Activated CD4-positive, alpha-beta T cell treated with anti-CD3 and anti-CD28 coated beads for 36 hours (primary cell): ENCODE measurements at regions of chr2 and their contacts with region 1.

Region 1: GRCh38 chr2:64523666-64524603 is at the start of gene AFTPH:
- DNase-seq: peak; percentile 100
- ATAC-seq: peak; percentile 93
- H3K4me3 Mint-ChIP-seq: peak within 1 kb of the TSS; percentile 95
- H3K27ac Mint-ChIP-seq: peak within 1 kb of the TSS; percentile 100
- H3K4me1 Mint-ChIP-seq: peaks cover 30% of the 10 kb centered on the region
- H3K27me3 Mint-ChIP-seq: no peaks in the 10 kb centered on the region
- total RNA-seq, gene AFTPH: 32.3 to 35.2 TPM

Region 2: DNA sequence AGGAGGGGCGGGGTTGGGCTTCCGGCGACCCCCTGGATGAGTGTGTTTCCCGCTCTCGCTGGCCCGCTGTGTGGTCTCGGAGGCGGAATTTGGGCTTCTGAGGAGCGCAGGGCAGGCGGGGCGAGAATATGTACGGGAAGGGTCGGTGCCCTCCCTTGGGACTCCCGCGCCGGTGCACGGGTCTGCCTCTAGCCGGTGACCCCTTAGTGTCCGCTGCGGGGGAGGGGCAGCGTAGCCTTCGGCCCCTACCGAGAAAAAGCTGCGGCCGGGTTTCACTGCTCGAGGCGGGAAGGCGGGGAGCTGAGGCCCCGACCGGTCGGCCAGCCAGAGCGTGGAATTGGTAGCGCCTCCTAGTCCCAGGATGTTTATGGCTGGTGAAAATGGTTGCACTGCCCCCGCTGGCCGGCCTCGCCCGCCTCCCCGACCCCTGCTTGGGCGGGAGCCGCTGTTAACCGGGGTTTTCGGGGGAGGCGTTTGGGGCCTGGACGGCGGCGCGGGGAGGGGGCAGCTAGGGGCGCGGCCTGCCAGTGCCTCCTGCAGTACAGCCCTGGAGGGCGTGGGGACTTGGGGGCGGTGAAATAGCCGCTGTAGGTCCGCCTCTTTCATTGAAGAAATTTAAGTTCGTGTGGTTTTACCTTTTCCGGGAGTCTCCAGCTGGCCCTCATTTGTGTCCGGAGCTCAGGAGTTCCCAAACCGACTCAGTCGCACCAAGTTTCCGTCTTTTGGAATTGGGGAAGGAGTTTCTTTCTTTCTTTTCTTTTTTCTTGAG is 682.5 kb before region 1 on chr2 and contains the start of gene UGP2:
- CTCF ChIA-PET with region 1: no interaction called
- POLR2A ChIA-PET with region 1: no interaction called
- intact Hi-C with region 1: loop called in 1 of 2 experiments (anchors 1 kb)
- DNase-seq: peak; percentile 91
- ATAC-seq: peak; percentile 72
- H3K4me3 Mint-ChIP-seq: peak within 1 kb of the TSS; percentile 92
- H3K27ac Mint-ChIP-seq: peak within 1 kb of the TSS; percentile 98
- H3K4me1 Mint-ChIP-seq: peaks cover 39% of the 10 kb centered on the region
- H3K27me3 Mint-ChIP-seq: no peaks in the 10 kb centered on the region
- total RNA-seq, gene UGP2: 98.4 to 144 TPM

Region 3: DNA sequence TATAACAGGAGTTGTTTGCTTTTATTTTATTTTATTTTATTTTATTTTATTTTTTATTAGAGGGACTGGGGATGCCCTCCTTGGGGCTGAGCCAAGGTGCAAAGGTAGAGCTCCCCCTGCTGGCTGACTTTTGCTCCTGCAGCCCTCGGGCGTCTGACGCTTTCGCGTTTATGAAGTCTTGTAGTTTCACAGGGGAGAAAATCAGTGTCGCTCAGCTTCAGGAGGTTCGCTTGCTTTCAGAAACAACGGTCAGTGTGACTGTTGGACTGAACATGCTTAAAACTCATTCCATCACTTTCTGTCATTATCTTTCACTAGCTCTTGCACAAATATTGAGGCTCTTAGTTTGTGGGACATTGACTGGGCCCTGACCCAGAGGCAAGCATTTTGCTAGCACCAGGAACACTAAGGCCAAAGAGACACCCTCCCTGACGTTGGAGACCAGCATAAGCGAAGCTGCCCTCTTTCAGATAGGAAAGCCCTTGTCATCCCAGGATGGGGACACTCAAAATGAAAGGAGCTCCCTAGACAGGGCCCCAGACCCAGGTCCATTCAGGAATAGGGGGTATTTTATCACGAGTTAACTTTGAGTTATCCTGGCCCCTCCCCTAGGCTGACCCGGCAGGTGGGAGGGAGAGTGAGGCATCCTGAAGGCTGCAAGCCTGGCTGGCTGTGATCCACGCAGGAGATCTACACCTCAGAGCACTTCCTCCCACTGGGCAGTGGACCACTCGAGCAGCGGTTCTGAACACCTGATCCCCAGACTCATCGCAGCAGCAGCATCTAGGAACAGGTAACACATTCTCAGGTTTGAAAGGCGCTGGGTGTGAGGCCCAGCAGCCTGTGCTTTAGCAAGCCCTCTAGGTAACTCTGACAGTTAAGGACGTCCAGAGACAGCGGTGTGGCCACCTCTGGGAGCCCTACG is 35.6 kb before region 1 on chr2:
- CTCF ChIA-PET with region 1: interaction called, 15 read pairs
- POLR2A ChIA-PET with region 1: no interaction called
- intact Hi-C with region 1: no loop called
- DNase-seq: peak; percentile 89
- ATAC-seq: peak; percentile 87
- H3K4me3 Mint-ChIP-seq: no peak overlapping the region
- H3K27ac Mint-ChIP-seq: no peak overlapping the region
- H3K4me1 Mint-ChIP-seq: peaks cover 8% of the 10 kb centered on the region
- H3K27me3 Mint-ChIP-seq: no peaks in the 10 kb centered on the region

Region 4: DNA sequence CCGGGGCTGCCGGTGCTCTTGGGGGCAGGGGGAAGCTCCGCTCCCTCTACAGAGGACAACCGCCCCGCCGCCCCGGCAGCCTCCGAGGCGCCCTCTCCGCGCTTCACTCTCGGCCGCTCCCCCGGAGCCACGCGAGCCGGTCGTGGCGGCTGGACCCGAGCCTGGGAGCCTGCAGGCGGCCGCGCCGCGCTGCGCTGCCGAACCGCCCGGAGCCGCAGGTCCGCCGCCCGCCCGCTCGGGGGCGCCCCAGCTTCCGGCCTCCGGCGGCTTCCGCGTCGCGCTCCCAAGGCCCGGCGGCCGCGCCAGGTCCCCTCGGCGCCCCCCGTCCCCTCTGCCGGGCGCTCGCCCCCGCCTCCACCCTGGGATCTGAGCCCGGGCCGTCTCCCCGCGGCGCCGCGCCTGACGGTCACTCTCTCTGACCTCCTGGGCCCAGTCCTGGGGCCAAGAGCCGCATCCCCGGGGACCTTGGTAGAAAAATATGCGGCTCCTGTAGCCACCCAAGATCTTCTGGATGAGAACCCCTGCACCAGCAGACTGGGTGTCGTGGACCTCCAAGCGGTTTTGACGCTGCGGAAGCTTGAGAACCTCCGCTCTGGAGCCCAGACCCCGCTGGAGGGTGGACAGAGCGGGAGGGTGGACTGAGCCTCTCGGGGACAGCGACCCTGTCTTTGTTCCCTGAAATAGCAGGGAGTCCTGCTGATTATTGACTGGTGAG is 85.4 kb after region 1 on chr2:
- CTCF ChIA-PET with region 1: interaction called, 31 read pairs
- POLR2A ChIA-PET with region 1: no interaction called
- intact Hi-C with region 1: loop called (anchors 1 kb)
- DNase-seq: peak; percentile 82
- ATAC-seq: peak; percentile 61
- H3K4me3 Mint-ChIP-seq: peak overlapping the region; percentile 65
- H3K27ac Mint-ChIP-seq: no peak overlapping the region
- H3K4me1 Mint-ChIP-seq: peaks cover 25% of the 10 kb centered on the region
- H3K27me3 Mint-ChIP-seq: no peaks in the 10 kb centered on the region

Region 5: DNA sequence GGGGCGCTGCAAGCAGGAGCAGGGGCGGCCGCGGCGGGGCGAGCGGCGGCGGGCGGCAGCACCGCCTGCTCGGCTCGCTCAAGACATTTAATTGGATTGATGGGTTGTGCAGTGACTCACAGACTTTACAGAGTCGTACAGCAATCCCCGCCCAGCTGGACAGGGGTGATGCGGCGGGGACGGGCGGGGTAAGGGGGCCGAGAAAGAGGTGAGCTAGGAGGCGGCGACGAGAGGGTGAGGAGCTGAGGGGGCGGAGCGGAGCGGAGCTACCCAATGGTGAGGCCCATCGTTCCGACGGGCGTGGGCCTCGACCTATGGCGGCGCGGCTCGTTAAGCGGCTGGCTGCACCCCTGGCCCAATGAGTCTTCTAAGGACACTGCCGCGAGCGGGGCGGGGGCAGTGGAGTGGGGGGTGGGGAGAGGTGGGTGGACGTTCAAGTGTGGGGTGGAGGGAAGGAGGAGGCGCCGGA is 226.9 kb after region 1 on chr2:
- CTCF ChIA-PET with region 1: interaction called, 3 read pairs
- POLR2A ChIA-PET with region 1: interaction called, 4 read pairs
- intact Hi-C with region 1: loop called (anchors 1 kb)
- DNase-seq: peak; percentile 99
- ATAC-seq: peak; percentile 90
- H3K4me3 Mint-ChIP-seq: peak overlapping the region; percentile 92
- H3K27ac Mint-ChIP-seq: peak overlapping the region; percentile 92
- H3K4me1 Mint-ChIP-seq: peaks cover 24% of the 10 kb centered on the region
- H3K27me3 Mint-ChIP-seq: no peaks in the 10 kb centered on the region

Region 6: GRCh38 chr2:64873472-64873924 is 349.6 kb after region 1 on chr2:
- CTCF ChIA-PET with region 1: interaction called, 20 read pairs
- POLR2A ChIA-PET with region 1: no interaction called
- intact Hi-C with region 1: loop called (anchors 1 kb)
- DNase-seq: peak; percentile 89
- ATAC-seq: peak; percentile 93
- H3K4me3 Mint-ChIP-seq: no peak overlapping the region
- H3K27ac Mint-ChIP-seq: no peak overlapping the region
- H3K4me1 Mint-ChIP-seq: peaks cover 3% of the 10 kb centered on the region
- H3K27me3 Mint-ChIP-seq: no peaks in the 10 kb centered on the region

Region 7: DNA sequence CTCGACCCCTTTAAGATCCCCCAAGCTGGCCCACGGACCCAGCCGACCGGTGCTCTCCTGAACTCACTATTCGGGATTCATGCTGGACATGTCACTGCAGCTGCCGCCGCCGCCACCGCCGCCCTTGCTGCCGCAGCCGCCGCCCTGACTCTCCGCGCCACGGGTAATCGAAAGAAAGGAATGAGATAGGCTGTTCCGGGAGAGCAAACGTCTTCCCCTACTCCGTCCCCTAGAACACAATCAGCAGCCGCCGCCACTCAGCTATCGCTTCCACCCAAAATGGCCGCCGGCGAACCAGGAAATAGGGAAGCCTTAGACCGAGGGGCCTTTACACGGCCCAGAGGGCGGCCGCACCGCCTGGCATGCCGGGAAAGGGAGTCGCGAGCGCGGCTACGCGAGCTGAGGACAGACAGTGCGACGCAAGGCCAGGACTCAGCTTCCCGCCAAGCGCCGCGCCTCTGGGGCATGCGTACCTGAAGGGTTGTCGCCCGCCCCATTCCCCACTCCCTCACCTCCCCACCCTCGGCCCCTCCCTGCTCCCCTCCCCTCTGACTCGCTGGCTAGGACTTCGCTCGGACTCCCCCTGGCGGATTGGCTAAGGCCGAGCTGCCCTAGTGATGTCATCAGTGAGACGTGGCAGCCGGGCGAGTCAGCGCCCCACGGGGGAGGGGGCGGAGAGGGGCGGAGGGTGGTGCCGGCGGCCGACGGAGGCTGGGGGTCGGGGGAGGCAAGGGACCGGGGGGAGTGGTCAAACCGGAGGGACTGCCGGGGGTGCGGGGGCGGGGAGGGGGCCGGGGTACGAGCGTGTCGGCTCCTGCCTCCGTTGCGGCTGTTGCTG is 606.1 kb after region 1 on chr2 and contains the start of gene RAB1A:
- CTCF ChIA-PET with region 1: no interaction called
- POLR2A ChIA-PET with region 1: interaction called, 4 read pairs
- intact Hi-C with region 1: loop called in 1 of 2 experiments (anchors 1 kb)
- DNase-seq: peak; percentile 100
- ATAC-seq: peak; percentile 95
- H3K4me3 Mint-ChIP-seq: peak within 1 kb of the TSS; percentile 100
- H3K27ac Mint-ChIP-seq: peak within 1 kb of the TSS; percentile 100
- H3K4me1 Mint-ChIP-seq: peaks cover 30% of the 10 kb centered on the region
- H3K27me3 Mint-ChIP-seq: no peaks in the 10 kb centered on the region
- total RNA-seq, gene RAB1A: 77.1 to 84.8 TPM